Right ventricle myocardium superior (tissue), 1 donor: ENCODE measurements at regions of chr22 and their contacts with region 1.

Region 1: DNA sequence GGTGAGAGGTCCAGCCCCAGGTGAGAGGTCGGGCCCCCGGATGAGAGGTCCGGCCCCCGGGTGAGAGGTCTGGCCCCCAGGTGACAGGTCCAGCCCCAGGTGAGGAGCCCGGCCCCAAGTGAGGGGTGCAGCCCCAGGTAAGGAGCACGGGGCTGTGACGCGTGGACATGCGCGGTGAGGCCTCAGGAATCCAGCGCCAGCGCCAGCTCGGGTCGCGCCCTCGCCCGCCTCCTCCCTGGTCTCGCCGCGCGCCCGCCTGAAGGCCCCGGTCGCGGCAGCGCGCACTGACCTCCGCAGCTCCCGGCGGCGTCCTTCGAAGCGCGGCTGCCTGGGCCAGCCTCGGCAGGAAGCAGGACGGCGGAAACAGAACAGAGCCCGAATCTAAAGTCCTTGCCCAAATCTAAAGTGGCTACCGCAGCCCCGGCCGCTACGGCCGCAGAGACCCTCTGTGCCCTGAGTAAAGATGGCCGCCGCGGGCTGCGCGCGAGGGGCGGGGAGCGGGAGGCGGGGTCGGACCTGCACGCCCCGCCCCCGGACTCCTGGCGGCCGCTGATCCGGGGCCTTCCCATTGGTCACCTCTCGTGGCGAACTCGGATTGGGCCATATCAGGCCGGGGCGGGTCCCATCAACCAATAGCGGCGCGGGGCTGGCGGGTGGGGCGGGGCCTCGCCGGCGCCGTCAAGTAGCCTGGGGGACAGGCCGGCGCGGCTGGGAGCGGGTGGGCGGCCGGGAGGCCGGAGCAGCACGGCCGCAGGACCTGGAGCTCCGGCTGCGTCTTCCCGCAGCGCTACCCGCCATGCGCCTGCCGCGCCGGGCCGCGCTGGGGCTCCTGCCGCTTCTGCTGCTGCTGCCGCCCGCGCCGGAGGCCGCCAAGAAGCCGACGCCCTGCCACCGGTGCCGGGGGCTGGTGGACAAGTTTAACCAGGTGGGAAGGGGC is at the starts of genes ALG12 and CRELD2:
- DNase-seq: peak; percentile 99
- ATAC-seq: peak; percentile 97
- total RNA-seq, gene ALG12: 13.8 TPM
- total RNA-seq, gene CRELD2: 22.1 TPM

Region 2: GRCh38 chr22:49735411-49735900 is 182.8 kb before region 1 on chr22:
- intact Hi-C with region 1: no loop called
- DNase-seq: no peak
- ATAC-seq: no peak

Region 3: GRCh38 chr22:49789289-49790141 is 128.7 kb before region 1 on chr22:
- intact Hi-C with region 1: loop called (anchors 10 kb)
- DNase-seq: peak; percentile 72
- ATAC-seq: peak; percentile 72